Colonic mucosa (tissue), 4 donors: ENCODE measurements at regions of chr16 and their contacts with region 1.

Region 1: DNA sequence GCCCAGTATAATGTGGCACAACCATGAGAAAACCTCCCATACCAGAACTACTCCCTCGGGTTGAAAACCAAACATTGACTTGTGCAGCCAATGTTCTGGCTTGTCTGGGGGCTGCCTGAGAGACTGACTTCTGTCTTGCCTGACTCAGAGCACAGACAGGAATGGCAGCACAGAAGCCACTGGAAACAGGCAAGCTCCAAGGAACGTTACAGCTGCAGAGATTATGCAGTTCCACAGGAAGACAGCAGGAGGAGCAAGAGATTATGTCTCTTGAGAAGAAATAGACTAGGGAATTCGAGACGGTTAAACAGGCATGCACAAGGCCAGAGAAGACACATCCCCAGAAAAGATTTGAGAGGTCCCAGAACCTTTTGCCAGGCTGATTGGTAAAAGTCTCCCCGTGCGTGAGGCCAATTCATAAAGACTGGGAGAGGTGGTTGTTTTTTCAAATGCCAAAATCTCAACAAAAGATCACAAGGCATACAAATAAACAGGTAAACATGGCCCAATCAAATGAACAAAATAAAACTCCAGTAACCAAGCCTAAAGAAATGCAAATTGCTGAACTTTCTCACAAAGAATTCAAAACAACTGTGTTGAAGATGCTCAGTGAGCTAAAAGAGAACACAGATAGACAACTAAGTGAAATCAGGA is 90.6 kb upstream of the CDH5 start:
- DNase-seq: peak; percentile 75
- H3K4me3 ChIP-seq: no peak overlapping the region
- H3K27ac ChIP-seq: no peak overlapping the region
- H3K4me1 ChIP-seq: no peaks in the 10 kb centered on the region
- H3K27me3 ChIP-seq: no peaks in the 10 kb centered on the region
- CTCF ChIP-seq: peak; percentile 65

Region 2: GRCh38 chr16:66045626-66046025 is 230.3 kb before region 1 on chr16:
- intact Hi-C with region 1: no loop called
- DNase-seq: no peak
- H3K4me3 ChIP-seq: no peak overlapping the region
- H3K27ac ChIP-seq: no peak overlapping the region
- H3K4me1 ChIP-seq: no peaks in the 10 kb centered on the region
- H3K27me3 ChIP-seq: no peaks in the 10 kb centered on the region
- CTCF ChIP-seq: no peak

Region 3: DNA sequence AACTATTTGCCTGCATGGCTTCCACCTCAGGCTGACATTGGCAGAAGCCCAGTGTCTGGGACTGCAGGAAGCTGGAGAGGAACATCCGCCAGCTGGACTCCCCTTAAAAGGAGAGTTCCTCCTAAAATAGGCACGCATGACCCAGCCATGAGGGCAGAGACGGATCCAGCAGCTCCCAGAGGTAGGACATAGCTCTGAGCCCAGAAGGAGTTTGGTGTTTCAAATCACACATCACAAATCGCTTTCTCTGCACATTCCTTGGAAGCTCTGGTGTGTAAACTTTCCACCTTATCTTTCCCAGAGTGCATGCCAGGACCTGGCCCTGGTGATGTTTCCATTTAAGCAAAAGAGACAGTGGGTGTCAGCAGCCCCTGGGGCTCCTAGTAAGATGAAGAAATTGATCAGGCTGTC is 140.5 kb before region 1 on chr16:
- intact Hi-C with region 1: no loop called
- DNase-seq: no peak
- H3K4me3 ChIP-seq: no peak overlapping the region
- H3K27ac ChIP-seq: no peak overlapping the region
- H3K4me1 ChIP-seq: no peaks in the 10 kb centered on the region
- H3K27me3 ChIP-seq: no peaks in the 10 kb centered on the region
- CTCF ChIP-seq: no peak

Region 4: GRCh38 chr16:66167564-66168291 is 108.2 kb before region 1 on chr16:
- intact Hi-C with region 1: no loop called
- DNase-seq: no peak
- H3K4me3 ChIP-seq: no peak overlapping the region
- H3K27ac ChIP-seq: no peak overlapping the region
- H3K4me1 ChIP-seq: no peaks in the 10 kb centered on the region
- H3K27me3 ChIP-seq: no peaks in the 10 kb centered on the region
- CTCF ChIP-seq: no peak

Region 5: GRCh38 chr16:66315210-66315825 is 39.4 kb after region 1 on chr16:
- intact Hi-C with region 1: loop called (anchors 2 kb)
- DNase-seq: peak; percentile 60
- H3K4me3 ChIP-seq: no peak overlapping the region
- H3K27ac ChIP-seq: no peak overlapping the region
- H3K4me1 ChIP-seq: no peaks in the 10 kb centered on the region
- H3K27me3 ChIP-seq: no peaks in the 10 kb centered on the region
- CTCF ChIP-seq: peak; percentile 96

Region 6: DNA sequence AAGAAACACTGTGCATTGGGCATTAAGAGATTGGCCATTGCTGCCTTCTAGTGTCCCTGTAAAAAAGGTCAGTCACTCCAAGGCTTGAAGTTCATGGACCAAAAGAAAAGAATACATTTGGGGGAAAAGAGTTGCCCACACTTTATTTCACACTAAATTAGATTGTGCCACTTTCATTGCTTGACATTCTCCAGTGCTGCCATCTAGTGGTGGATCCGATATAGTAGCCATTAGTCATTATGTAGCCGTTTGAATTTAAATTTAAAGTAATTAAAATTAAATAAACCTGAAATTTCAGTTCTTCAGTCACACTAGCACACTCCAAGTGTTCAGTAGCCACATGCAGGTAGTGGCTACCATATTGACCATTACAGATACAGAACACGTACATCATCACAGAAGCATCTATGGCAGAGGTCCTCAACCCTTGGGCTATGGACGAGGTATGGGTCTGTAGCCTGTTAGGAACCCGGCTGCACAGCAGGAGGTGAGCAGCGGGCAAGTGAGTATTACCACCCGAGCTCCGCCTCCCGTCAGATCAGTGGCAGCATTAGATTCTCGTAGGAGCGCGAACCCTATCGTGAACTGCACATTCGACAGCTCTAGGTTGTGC is 68.7 kb after region 1 on chr16:
- intact Hi-C with region 1: loop called (anchors 1 kb)
- DNase-seq: peak; percentile 45
- H3K4me3 ChIP-seq: no peak overlapping the region
- H3K27ac ChIP-seq: no peak overlapping the region
- H3K4me1 ChIP-seq: no peaks in the 10 kb centered on the region
- H3K27me3 ChIP-seq: no peaks in the 10 kb centered on the region
- CTCF ChIP-seq: peak; percentile 72

Region 7: GRCh38 chr16:66457888-66458287 is 182.0 kb after region 1 on chr16:
- intact Hi-C with region 1: no loop called
- DNase-seq: no peak
- H3K4me3 ChIP-seq: no peak overlapping the region
- H3K27ac ChIP-seq: no peak overlapping the region
- H3K4me1 ChIP-seq: no peaks in the 10 kb centered on the region
- H3K27me3 ChIP-seq: no peaks in the 10 kb centered on the region
- CTCF ChIP-seq: no peak